PC-9 (cell line): ENCODE measurements at regions of chr2 and their contacts with region 1.

Region 1: DNA sequence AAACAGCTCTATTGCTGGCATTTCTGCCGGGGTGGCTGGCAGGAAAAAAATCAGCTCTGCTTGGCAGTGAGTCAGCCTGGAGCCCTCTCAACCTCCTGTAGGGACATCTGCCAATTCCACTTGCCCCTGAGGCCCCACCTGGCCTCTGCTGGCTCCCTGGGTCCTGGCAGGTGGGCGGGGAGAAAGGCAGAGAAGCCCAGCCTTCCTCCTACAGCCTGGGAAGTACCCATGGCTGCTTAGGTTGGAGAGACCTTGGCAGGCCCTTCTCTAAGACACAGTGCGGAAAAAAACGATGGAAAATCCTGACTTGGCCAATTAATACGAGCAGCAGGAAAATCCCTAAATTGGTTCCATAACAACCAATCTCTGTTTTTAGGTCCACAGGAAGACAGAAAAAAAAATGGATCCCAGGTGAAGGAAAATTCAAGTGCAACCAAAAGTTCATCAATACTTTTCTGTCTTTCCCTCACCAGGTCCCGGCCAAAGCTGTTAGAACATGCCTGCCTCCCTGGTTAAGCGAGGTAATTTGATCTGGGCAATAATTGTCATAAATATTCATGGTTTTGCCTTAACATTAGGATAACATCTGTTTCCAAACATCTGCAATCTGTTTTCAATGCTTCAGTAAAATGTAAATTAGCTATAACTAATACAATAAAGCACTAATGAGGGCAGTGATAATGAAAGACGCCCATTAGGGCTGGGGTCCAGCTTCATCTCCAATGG is 245.9 kb downstream of the TFCP2L1 start:
- DNase-seq: peak; percentile 68 to 92
- H3K4me3 ChIP-seq: no peak overlapping the region
- H3K27ac ChIP-seq: no peak overlapping the region
- H3K4me1 ChIP-seq: no peaks in the 10 kb centered on the region
- H3K27me3 ChIP-seq: peaks cover 41% of the 10 kb centered on the region
- CTCF ChIP-seq: no peak

Region 2: DNA sequence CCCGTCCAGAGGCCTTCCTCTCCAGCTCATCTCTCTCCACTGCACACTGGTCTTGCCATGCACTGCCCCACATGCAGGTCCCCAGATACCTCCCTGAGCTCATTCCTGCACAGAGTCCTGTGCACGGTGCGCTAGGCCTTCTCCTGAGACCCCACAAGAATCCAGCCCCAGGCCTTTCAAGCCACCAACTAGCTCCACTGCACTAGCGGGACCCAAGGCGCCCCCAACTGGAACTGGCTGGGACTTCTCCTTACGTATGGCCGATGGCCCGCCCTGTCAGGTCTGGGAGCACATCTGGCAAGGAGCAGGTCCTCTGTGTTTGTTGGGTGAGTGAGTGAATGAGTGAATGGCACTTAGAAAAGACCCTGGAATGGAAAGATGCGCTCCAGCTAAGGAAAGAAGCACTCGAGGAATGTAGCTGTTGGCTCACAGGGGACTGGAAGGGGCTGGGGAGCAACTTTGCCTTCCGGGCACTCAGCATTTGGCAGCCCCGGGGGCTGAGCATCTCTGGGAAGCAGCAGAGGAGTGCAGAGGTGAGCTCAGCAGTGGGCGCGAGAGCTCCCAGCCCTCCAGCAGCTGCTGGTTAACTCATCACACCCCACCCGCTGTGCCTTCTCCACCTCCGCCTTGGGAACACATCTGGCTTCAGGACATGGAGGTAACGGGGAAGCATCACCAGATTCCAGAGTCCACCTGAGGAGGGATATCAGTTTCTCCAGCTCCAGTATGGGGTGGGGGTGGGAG is 80.3 kb before region 1 on chr2:
- CTCF ChIA-PET with region 1: no interaction called
- POLR2A ChIA-PET with region 1: no interaction called
- intact Hi-C with region 1: loop called (anchors 10 kb)
- DNase-seq: no peak
- H3K4me3 ChIP-seq: no peak overlapping the region
- H3K27ac ChIP-seq: no peak overlapping the region
- H3K4me1 ChIP-seq: no peaks in the 10 kb centered on the region; the same call in 1 of the 2 replicates
- H3K27me3 ChIP-seq: peaks cover 10% of the 10 kb centered on the region
- CTCF ChIP-seq: peak; percentile 43; the same call in 1 of the 2 replicates

Region 3: DNA sequence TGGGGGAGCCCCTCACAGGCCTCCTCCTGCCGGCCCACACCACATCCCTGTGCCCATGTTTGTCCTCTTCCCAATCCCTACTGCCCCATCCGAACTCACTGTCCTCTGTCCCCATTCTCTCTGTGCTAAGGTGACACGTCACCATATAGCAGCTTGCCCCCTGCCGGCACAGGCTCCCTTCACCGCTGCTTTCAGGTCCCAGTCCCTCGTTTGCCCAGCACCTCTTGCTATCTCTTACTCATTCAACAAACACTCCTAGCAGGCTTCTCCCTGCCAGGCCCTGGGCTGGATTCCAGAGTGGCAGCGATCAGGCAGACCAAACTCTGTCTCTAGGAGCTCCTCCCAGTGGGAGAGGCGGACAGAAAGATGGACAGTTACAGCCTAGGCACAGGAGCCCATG is 171.6 kb after region 1 on chr2:
- CTCF ChIA-PET with region 1: no interaction called
- POLR2A ChIA-PET with region 1: no interaction called
- intact Hi-C with region 1: no loop called
- DNase-seq: peak in 1 of 2 experiments; percentile 67
- H3K4me3 ChIP-seq: no peak overlapping the region
- H3K27ac ChIP-seq: no peak overlapping the region
- H3K4me1 ChIP-seq: peaks cover 29% of the 10 kb centered on the region
- H3K27me3 ChIP-seq: no peaks in the 10 kb centered on the region
- CTCF ChIP-seq: peak; percentile 29; the same call in 1 of the 2 replicates

Region 4: GRCh38 chr2:121345887-121346286 is 306.8 kb after region 1 on chr2:
- CTCF ChIA-PET with region 1: no interaction called
- POLR2A ChIA-PET with region 1: no interaction called
- intact Hi-C with region 1: no loop called
- DNase-seq: no peak
- H3K4me3 ChIP-seq: no peak overlapping the region
- H3K27ac ChIP-seq: no peak overlapping the region
- H3K4me1 ChIP-seq: no peaks in the 10 kb centered on the region; the same call in 1 of the 2 replicates
- H3K27me3 ChIP-seq: no peaks in the 10 kb centered on the region
- CTCF ChIP-seq: no peak